GM18951 (cell line): ENCODE measurements at regions of chr16 and their contacts with region 1.

Region 1: GRCh38 chr16:57167953-57168352 is 17.9 kb downstream of the PSME3IP1 start:
- POLR2A ChIP-seq: no peak

Region 2: DNA sequence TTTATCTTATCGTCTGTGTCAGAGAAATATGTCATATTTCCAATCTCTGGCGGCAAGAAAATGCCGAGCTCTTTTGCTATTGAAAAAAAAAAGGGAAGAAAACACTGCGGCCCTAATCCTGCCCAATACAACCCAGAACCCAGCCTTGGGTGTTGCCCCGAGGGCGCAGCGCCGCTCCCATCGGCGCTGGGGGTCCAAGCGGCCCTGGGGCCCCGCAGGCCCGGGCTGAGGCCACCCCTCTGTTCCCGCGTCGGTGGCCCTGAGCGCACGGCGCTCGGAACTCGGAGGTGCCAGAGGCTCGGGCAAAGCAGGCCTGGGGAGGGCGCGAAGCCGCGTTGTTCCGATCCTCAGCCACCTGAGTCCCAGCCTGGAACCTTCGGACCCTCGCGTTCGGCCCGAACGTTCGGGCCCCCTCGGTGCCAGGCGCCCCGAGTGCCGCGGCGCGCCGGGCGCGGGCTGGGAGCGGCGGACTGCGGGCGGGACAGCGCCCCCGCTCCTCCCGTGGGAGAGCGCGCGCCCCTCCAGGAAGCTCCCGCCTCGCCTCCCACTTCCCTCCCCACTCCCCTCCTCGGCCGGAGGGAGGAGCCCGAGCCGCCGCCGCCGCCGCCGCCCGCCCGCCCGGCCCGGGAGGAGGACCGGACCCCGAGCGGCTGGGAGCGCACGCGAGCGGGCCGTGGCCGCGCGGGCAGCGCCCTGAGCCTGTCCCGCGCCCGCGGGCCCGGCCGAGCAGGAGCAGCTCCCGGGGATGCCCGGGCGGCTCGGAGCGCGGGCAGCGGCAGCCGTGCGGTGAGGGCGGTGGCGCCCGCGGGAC is 75.8 kb before region 1 on chr16 and contains the start of gene CPNE2:
- in situ Hi-C with region 1: loop called (anchors 5 kb)
- POLR2A ChIP-seq: no peak